Head of caudate nucleus (tissue), 42 donors: ENCODE measurements at regions of chr1 and their contacts with region 1.

Region 1: GRCh38 chr1:91511386-91511785 is 10.7 kb downstream of the CDC7 start:
- DNase-seq: no peak

Region 2: GRCh38 chr1:91386109-91386508 is 125.3 kb before region 1 on chr1:
- intact Hi-C with region 1: no loop called
- DNase-seq: no peak

Region 3: GRCh38 chr1:91924146-91924545 is 412.8 kb after region 1 on chr1:
- intact Hi-C with region 1: loop called (anchors 10 kb)
- DNase-seq: peak in 1 of 42 donors; percentile 17